ENCODE measurements at regions of chr6 and their contacts with region 1.

Region 1: DNA sequence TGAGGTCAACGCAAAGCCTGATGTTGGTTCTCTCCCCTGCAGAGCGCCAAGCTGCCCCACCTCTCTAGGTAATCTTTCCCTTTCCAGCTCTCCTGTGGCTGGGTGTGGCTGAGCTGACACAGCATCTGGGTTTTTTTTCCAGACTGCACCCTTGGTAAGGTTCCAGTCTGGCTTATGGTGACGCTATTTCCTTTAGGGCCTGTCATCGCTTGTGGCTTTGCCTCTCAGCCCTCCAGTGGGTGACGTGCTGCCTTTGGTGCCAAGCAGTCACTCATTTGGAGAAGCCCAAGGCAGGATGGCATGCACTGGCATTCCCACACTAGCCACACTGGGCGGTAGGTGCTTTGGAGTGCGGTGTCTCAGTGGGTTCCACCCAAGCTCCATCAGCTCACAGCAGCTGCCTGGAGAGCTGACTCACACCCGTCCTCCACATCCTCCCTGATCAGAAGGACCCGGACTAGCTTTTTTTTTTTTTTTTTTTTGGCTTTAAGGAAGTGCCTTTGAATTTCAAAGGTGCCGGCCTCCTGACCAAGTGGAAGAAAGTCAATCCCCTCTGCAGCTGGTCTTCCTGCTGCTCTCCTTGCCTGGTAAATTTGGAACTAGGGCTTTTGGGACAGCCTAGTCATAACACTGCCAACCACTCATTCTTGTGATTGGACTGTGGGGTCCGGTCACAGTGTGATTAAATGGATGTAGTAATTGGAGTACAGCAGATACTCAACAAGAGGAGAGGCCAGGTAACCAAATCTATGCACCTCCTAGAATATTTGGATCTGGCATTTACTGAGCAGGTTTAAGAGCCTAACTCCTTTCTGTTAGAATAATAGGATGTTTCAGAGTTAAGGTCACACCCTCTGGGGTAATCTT is 153.6 kb downstream of the CD83 start:
- DNase-seq: peak; percentile 90
- H3K4me3 Mint-ChIP-seq: peak overlapping the region; percentile 30
- H3K27ac Mint-ChIP-seq: peak overlapping the region; percentile 80
- H3K4me1 Mint-ChIP-seq: peaks cover 44% of the 10 kb centered on the region
- H3K27me3 Mint-ChIP-seq: no peaks in the 10 kb centered on the region

Region 2: DNA sequence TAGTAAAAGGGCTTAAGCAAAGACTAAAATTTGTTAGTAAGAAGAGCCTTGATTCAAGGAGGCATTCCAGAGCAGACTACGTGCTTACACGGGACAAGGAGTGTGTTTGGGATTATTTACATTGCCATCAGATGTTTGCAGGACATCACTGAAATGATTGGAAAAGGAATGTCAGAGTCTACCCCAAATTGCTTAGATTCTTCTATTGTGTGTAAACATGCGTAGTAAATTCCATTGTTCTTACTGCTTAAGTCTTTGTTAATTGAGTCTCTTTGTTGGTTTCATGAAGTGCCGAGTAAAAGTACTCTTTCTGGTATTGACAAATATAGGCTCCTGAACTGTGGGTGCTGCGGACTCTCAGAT is 93.1 kb before region 1 on chr6:
- intact Hi-C with region 1: no loop called
- DNase-seq: no peak
- H3K4me3 Mint-ChIP-seq: no peak overlapping the region
- H3K27ac Mint-ChIP-seq: no peak overlapping the region
- H3K4me1 Mint-ChIP-seq: peaks cover 2% of the 10 kb centered on the region
- H3K27me3 Mint-ChIP-seq: peaks cover 2% of the 10 kb centered on the region

Region 3: DNA sequence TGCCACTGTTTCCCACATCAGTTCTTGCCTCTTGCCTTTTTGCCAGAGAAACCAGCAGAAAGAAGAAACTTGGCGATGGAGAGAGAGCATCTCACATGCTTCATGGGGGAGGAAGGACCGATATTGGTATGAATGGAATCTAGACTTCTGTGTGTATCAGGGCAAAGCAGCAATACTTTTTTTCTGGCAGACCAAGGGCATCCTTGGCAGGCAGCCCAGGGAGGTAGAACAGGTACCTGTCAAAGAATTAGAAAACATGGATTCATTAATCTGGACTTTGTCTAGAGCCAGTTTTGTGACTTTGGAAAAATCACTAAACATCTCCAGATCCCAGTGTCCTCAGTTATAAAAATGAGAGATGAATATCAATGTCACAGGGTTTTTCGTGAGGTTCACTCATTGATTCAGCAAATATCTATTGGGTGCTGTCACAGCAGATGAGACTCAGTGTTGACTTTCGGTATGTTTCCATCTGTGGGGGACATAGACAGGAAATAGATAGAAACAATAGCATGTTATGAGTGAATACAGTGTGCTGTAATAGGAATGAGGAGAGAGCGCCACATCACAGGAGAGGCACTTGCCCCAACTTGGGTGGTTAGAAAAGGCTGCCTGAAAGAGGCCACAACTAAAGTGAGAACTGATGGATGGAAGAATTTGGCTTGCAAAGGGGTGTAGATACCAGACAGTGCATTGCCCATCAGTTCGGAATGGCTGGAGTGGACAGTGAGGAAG is 39.4 kb before region 1 on chr6:
- intact Hi-C with region 1: loop called (anchors 5 kb)
- DNase-seq: no peak
- H3K4me3 Mint-ChIP-seq: no peak overlapping the region
- H3K27ac Mint-ChIP-seq: peak overlapping the region; percentile 54
- H3K4me1 Mint-ChIP-seq: peaks cover 8% of the 10 kb centered on the region
- H3K27me3 Mint-ChIP-seq: no peaks in the 10 kb centered on the region